Activated CD4-positive, alpha-beta T cell treated with anti-CD3 and anti-CD28 coated beads, Interleukin-2, amount 10 ng/mL, durations not matched to agents 24 days and 14 days (primary cell): ENCODE measurements at regions of chr15 and their contacts with region 1.

Region 1: GRCh38 chr15:52227456-52227855 is 36.3 kb upstream of the GNB5 start:
- DNase-seq: peak; percentile 90
- H3K4me3 Mint-ChIP-seq: no peak overlapping the region
- H3K27ac Mint-ChIP-seq: no peak overlapping the region
- H3K4me1 Mint-ChIP-seq: peaks cover 10% of the 10 kb centered on the region
- H3K27me3 Mint-ChIP-seq: no peaks in the 10 kb centered on the region

Region 2: GRCh38 chr15:51721199-51721960 is 506.1 kb before region 1 on chr15:
- intact Hi-C with region 1: no loop called
- DNase-seq: no peak
- H3K4me3 Mint-ChIP-seq: no peak overlapping the region
- H3K27ac Mint-ChIP-seq: no peak overlapping the region
- H3K4me1 Mint-ChIP-seq: peaks cover 11% of the 10 kb centered on the region
- H3K27me3 Mint-ChIP-seq: no peaks in the 10 kb centered on the region

Region 3: GRCh38 chr15:52179278-52180195 is 47.9 kb before region 1 on chr15:
- intact Hi-C with region 1: loop called (anchors 2 kb)
- DNase-seq: peak; percentile 97
- H3K4me3 Mint-ChIP-seq: peak overlapping the region; percentile 87
- H3K27ac Mint-ChIP-seq: peak overlapping the region; percentile 97
- H3K4me1 Mint-ChIP-seq: peaks cover 26% of the 10 kb centered on the region
- H3K27me3 Mint-ChIP-seq: no peaks in the 10 kb centered on the region

Region 4: GRCh38 chr15:52208306-52208946 is 19.0 kb before region 1 on chr15:
- intact Hi-C with region 1: loop called (anchors 2 kb)
- DNase-seq: peak; percentile 93
- H3K4me3 Mint-ChIP-seq: no peak overlapping the region
- H3K27ac Mint-ChIP-seq: no peak overlapping the region
- H3K4me1 Mint-ChIP-seq: peaks cover 6% of the 10 kb centered on the region
- H3K27me3 Mint-ChIP-seq: peaks cover 4% of the 10 kb centered on the region